Esophagus squamous epithelium (tissue), 5 donors: ENCODE measurements at regions of chr1 and their contacts with region 1.

Region 1: GRCh38 chr1:231266811-231267322 is 25.9 kb downstream of the GNPAT start:
- DNase-seq: no peak
- H3K4me3 ChIP-seq: no peak overlapping the region
- H3K27ac ChIP-seq: no peak overlapping the region
- H3K4me1 ChIP-seq: no peaks in the 10 kb centered on the region
- H3K27me3 ChIP-seq: no peaks in the 10 kb centered on the region
- CTCF ChIP-seq: no peak
- POLR2A ChIP-seq: no peak

Region 2: DNA sequence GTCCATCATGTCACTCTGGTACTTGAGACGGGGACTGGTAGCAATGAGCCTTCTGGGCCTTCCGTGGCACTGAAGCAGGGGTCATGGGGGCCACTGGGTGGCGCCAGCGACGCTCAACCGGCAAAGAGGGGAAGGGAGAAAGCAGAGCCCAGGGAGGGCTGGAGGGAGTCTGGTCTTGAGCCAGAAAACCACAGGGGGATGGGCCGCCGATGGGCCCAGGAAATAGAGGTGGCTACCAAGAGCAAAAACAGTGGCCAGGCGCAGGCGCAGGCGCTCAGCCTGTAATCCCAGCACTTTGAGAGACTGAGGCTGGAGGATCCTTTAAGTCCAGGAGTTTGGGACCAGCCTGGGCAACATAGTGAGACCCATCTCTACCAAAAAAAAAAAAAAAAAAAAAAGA is 49.0 kb after region 1 on chr1:
- intact Hi-C with region 1: loop called (anchors 10 kb)
- DNase-seq: no peak
- H3K4me3 ChIP-seq: no peak overlapping the region
- H3K27ac ChIP-seq: no peak overlapping the region
- H3K4me1 ChIP-seq: no peaks in the 10 kb centered on the region
- H3K27me3 ChIP-seq: no peaks in the 10 kb centered on the region
- CTCF ChIP-seq: peak in 3 of 6 experiments; percentile 18 to 47 (median 34)
- POLR2A ChIP-seq: no peak

Region 3: GRCh38 chr1:231376875-231377549 is 110.1 kb after region 1 on chr1:
- intact Hi-C with region 1: no loop called
- DNase-seq: no peak
- H3K4me3 ChIP-seq: no peak overlapping the region
- H3K27ac ChIP-seq: peak overlapping the region in 1 of 4 donors; percentile 2
- H3K4me1 ChIP-seq: peaks cover 0 to 31% (median 10%) of the 10 kb centered on the region in 3 donors
- H3K27me3 ChIP-seq: no peaks in the 10 kb centered on the region
- CTCF ChIP-seq: no peak
- POLR2A ChIP-seq: no peak